HepG2 (cell line): ENCODE measurements at regions of chr2 and their contacts with region 1.

Region 1: GRCh38 chr2:225556461-225556860 is 157.0 kb downstream of the NYAP2 start:
- DNase-seq: no peak
- ATAC-seq: no peak
- H3K4me3 ChIP-seq: no peak overlapping the region
- H3K27ac ChIP-seq: no peak overlapping the region
- H3K4me1 ChIP-seq: no peaks in the 10 kb centered on the region
- H3K27me3 ChIP-seq: no peaks in the 10 kb centered on the region
- CTCF ChIP-seq: no peak
- EP300 ChIP-seq: no peak
- POLR2A ChIP-seq: no peak
- RAD21 ChIP-seq: no peak

Region 2: GRCh38 chr2:225282858-225283710 is 273.4 kb before region 1 on chr2:
- CTCF ChIA-PET with region 1: no interaction called
- POLR2A ChIA-PET with region 1: no interaction called
- in situ Hi-C with region 1: no loop called
- intact Hi-C with region 1: loop called (anchors 1 kb)
- DNase-seq: peak; percentile 16
- ATAC-seq: peak; percentile 75
- H3K4me3 ChIP-seq: no peak overlapping the region
- H3K27ac ChIP-seq: no peak overlapping the region
- H3K4me1 ChIP-seq: no peaks in the 10 kb centered on the region
- H3K27me3 ChIP-seq: no peaks in the 10 kb centered on the region
- CTCF ChIP-seq: peak; percentile 64
- EP300 ChIP-seq: no peak
- POLR2A ChIP-seq: no peak
- RAD21 ChIP-seq: peak; percentile 11; the same call in 1 of the 2 replicates